B cell (primary cell): ENCODE measurements at regions of chr11 and their contacts with region 1.

Region 1: DNA sequence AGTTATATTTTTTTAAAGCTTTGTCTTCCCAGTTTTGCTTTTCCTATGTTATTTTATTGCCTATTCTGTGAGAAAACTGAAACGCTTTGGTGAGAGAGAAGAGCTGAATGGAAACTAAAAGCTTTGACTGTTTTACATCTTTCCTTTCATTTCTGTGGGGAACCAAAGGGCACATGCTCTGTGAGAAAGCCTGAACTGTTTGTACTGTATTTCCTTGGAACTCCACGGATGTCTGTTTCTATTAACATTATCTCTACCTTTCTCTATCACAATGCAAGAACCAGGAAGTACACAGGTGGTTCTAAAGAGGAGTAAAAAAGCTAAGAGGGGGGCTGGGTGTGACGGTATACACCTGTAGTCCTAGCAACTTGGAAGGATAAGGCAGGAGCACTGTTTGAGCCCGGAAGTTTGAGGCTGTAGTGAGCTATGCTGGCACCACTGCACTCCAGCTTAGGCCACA is 43.8 kb downstream of the CELF1 start:
- DNase-seq: no peak
- ATAC-seq: no peak
- H3K4me3 ChIP-seq: no peak overlapping the region
- H3K4me3 Mint-ChIP-seq: peak overlapping the region; percentile 52
- H3K27ac ChIP-seq: peak overlapping the region; percentile 46 to 91
- H3K27ac Mint-ChIP-seq: peak overlapping the region; percentile 81
- H3K4me1 ChIP-seq: peaks cover 56 to 68% of the 10 kb centered on the region in 2 donors
- H3K4me1 Mint-ChIP-seq: peaks cover 70% of the 10 kb centered on the region
- H3K27me3 ChIP-seq: no peaks in the 10 kb centered on the region
- H3K27me3 Mint-ChIP-seq: no peaks in the 10 kb centered on the region
- CTCF ChIP-seq: no peak

Region 2: GRCh38 chr11:47523468-47524225 is 14.5 kb after region 1 on chr11:
- CTCF ChIA-PET with region 1: interaction called, 4 read pairs
- POLR2A ChIA-PET with region 1: no interaction called
- intact Hi-C with region 1: loop called (anchors 2 kb)
- DNase-seq: peak; percentile 49
- ATAC-seq: peak; percentile 61
- H3K4me3 ChIP-seq: peak overlapping the region in 1 of 5 experiments; percentile 11
- H3K4me3 Mint-ChIP-seq: peak overlapping the region; percentile 79
- H3K27ac ChIP-seq: peak overlapping the region; percentile 36 to 77
- H3K27ac Mint-ChIP-seq: peak overlapping the region; percentile 87
- H3K4me1 ChIP-seq: peaks cover 35 to 46% of the 10 kb centered on the region in 2 donors
- H3K4me1 Mint-ChIP-seq: peaks cover 66% of the 10 kb centered on the region
- H3K27me3 ChIP-seq: no peaks in the 10 kb centered on the region
- H3K27me3 Mint-ChIP-seq: no peaks in the 10 kb centered on the region
- CTCF ChIP-seq: no peak